ENCODE measurements at regions of chr11 and their contacts with region 1.

Region 1: DNA sequence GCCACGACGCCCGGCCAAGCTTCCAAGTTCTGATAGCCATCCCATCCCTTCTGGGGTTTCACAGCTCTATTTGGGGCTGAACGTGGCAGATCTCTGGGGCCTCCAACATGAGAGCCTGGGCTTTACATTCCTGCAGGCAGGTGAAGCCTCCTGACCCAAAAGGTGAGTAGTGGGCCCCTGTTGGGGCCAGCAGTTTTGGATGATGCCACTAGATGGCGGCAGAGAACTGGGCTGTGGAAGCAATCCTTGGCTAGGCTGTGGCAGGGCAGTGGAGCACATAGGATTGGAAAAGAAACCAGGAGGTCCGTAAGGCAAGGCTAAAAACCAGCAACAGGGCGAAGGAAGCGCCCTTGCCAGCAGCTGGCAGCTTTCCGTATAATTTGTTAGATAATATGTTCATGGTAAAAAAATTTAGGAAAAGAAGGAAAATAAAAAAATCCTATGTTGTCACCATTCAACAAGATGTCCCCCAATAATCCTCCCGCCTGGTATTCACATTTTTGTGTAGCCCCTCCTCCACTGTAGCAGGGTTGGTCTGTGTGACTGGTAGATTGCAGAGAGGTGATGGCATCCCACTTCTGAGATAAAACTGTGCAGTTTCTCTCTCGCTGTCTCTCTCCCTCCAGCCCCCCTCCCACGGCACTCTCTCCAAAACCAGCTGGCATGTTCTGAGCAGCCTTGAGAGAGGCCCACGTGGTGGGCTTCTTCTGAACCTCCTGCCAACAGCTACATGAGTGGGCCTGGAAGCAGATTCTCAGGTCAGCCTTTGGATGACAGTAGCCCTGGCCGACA is 43.6 kb upstream of the OR4B1 start:
- DNase-seq: peak; percentile 31
- H3K4me3 Mint-ChIP-seq: no peak overlapping the region
- H3K27ac Mint-ChIP-seq: no peak overlapping the region
- H3K4me1 Mint-ChIP-seq: peaks cover 25% of the 10 kb centered on the region
- H3K27me3 Mint-ChIP-seq: no peaks in the 10 kb centered on the region

Region 2: GRCh38 chr11:48109046-48109666 is 63.9 kb before region 1 on chr11:
- intact Hi-C with region 1: no loop called
- DNase-seq: no peak
- H3K4me3 Mint-ChIP-seq: peak overlapping the region; percentile 54
- H3K27ac Mint-ChIP-seq: peak overlapping the region; percentile 88
- H3K4me1 Mint-ChIP-seq: peaks cover 68% of the 10 kb centered on the region
- H3K27me3 Mint-ChIP-seq: no peaks in the 10 kb centered on the region

Region 3: GRCh38 chr11:48307760-48308386 is 134.9 kb after region 1 on chr11:
- intact Hi-C with region 1: loop called (anchors 1 kb)
- DNase-seq: peak; percentile 43
- H3K4me3 Mint-ChIP-seq: no peak overlapping the region
- H3K27ac Mint-ChIP-seq: no peak overlapping the region
- H3K4me1 Mint-ChIP-seq: no peaks in the 10 kb centered on the region
- H3K27me3 Mint-ChIP-seq: peaks cover 10% of the 10 kb centered on the region

Region 4: DNA sequence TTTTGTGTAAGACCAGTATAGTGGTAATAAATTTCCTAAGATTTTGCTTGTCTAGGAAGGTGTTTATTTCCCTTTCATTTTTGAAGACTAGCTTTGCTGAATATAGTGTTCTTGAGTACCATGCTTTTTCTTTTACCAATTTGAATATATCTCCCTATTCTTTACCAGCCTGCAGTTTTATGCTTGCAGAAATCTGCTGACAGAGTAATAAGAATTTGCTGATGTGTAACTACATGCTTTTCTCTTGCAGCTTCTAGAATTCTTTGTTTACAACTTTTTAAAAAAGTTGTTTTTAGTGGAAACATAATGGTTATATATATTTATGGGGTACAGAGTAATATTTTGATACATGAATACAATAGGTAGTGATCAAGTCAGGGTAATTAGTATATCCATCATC is 1360.2 kb after region 1 on chr11:
- intact Hi-C with region 1: loop called (anchors 10 kb)
- DNase-seq: no peak
- H3K4me3 Mint-ChIP-seq: no peak overlapping the region
- H3K27ac Mint-ChIP-seq: no peak overlapping the region
- H3K4me1 Mint-ChIP-seq: no peaks in the 10 kb centered on the region
- H3K27me3 Mint-ChIP-seq: no peaks in the 10 kb centered on the region

Region 5: GRCh38 chr11:49995565-49995964 is 1822.6 kb after region 1 on chr11:
- intact Hi-C with region 1: loop called (anchors 10 kb)
- DNase-seq: no peak
- H3K4me3 Mint-ChIP-seq: no peak overlapping the region
- H3K27ac Mint-ChIP-seq: no peak overlapping the region
- H3K4me1 Mint-ChIP-seq: no peaks in the 10 kb centered on the region
- H3K27me3 Mint-ChIP-seq: no peaks in the 10 kb centered on the region

Measured in activated T-helper 1 cell treated with anti-CD3 and anti-CD28 coated beads, Interleukin-12 subunit alpha, Interleukin-12 subunit beta, Interleukin-2, Interleukin-4 antibody, amounts not matched to agents 30 ng/mL and 10 ng/mL and 1 ng/mL, durations not matched to agents 14 hours and 24 hours and 36 hours (primary cell).